ENCODE measurements at regions of chr14 and their contacts with region 1.

Region 1: DNA sequence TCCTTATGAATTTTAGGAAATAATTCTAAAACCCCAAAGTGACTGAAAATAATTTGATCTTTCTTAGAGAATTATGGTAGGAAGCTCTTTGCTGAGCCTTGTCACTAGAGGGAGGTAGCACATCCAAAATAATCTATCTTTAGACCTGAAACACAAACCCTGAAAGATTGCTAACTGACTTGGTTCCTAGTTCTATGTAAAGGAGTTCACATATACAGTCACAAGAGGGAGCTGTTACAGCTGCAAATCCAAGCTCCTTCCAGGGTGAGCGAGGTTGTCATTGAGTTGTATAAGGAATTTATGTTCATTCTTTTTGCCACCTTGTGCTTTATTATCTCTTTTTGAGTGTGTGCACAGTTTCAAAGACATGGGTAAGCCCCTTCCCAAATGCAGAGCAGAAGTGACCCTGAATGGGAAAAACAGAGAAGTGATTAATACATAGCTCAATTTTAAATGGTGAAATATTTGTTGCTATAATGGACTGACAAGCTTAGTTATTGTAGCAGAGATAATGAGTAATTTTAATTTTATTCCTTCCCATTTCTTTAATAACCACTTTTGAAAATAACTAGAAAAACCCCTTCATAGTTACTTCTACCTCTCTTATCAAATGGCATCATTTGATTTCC is 387.9 kb downstream of the DAD1 start:
- DNase-seq: no peak
- H3K4me3 ChIP-seq: no peak overlapping the region
- H3K27me3 ChIP-seq: no peaks in the 10 kb centered on the region
- CTCF ChIP-seq: peak; percentile 71

Region 2: DNA sequence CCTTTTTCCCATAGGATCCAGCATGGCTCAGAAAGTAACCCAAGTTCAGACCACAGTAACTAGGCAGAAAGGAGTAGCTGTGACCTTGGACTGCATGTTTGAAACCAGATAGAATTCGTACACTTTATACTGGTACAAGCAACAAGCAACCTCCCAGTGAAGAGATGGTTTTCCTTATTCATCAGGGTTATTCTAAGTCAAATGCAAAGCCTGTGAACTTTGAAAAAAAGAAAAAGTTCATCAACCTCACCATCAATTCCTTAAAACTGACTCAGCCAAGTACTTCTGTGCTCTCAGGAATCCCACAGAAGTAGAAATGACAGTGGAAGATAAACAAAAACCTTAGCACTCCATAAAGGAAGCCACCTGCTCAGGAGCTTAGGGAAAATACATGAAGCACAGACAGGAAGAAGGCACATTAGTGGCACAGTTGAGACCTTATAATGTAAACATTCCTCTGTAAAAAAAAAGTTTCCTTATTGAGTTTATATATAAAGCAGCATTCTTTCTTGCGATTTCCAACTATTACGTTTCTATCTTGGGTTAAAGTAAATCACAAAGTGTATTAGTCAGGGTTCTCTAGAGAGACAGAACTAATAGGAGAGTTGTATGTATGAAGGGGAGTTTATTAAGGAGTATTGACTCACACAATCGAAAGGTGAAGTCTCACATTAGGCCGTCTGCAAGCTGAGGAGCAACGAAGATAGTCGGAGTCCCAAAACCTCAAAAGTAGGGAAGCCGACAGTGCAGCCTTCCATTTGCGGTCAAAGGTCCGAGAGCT is 10.5 kb before region 1 on chr14:
- CTCF ChIA-PET with region 1: interaction called, 10 read pairs
- POLR2A ChIA-PET with region 1: no interaction called
- DNase-seq: peak; percentile 3
- H3K4me3 ChIP-seq: no peak overlapping the region
- H3K27me3 ChIP-seq: no peaks in the 10 kb centered on the region
- CTCF ChIP-seq: no peak

Region 3: DNA sequence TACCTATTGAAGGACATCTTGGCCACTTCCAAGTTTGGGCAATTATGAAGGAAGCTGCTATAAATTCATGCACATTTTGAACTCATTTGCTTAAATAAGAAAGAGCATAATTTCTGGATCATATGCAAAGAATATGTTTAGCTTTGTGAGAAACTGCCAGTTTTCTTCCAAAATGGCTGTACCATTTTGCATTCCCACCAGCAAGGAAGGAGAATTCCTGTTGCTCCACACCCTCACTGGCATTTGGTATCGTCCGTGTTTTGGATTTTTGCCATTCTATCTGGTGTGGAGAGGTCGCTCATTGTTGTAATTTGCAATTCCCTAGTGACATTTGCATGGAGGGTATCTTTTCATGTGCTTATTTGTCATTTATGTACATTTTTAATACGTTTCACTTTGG is 48.7 kb after region 1 on chr14:
- CTCF ChIA-PET with region 1: no interaction called
- POLR2A ChIA-PET with region 1: no interaction called
- DNase-seq: no peak
- H3K4me3 ChIP-seq: no peak overlapping the region
- H3K27me3 ChIP-seq: no peaks in the 10 kb centered on the region
- CTCF ChIP-seq: no peak